ENCODE measurements at regions of chr12 and their contacts with region 1.

Region 1: DNA sequence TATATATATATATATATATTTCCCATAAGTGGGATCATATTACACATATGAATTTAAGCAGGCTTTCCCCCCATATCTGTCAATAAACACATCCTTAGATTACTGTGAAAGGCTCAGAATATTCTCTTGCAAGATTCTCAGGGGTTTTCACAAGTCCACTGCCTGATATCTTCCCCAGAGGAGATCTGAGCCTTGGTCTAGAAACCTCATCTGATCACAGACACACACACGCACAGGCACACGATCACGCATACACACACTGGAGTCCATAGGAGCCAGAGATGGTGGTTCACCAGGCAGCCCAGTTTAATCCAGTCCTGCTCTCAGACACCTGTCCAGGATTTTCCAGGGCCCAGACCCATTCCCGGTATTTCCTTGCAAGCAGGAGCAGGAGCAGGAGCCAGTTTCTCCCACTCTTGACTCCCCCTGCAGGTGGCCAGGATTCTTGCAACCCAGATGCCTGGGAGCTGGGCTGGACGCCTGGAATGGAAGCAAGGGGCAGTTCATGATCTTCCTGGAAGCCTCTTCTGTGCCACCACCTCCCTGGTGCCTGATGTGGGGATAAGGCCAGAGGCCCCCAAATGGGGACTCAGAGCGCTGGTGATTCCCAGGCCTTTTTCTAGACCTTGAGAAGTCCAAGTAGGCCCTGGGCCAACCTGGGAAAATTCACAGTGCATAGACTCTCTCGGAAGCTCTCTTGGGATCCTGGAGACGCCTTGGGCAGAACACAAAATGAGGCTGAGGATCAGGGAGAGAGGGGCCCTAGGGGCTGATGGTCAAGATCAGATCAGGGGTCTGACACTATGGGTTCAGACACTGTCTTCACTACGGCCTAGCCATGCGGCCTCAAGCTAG is 16.5 kb upstream of the KRT78 start:
- DNase-seq: no peak
- H3K4me3 ChIP-seq: no peak overlapping the region
- CTCF ChIP-seq: peak; percentile 94

Region 2: GRCh38 chr12:52691076-52691840 is 174.1 kb before region 1 on chr12:
- CTCF ChIA-PET with region 1: interaction called, 11 read pairs
- POLR2A ChIA-PET with region 1: no interaction called
- DNase-seq: no peak
- H3K4me3 ChIP-seq: peak overlapping the region; percentile 12; the same call in 1 of the 2 replicates
- CTCF ChIP-seq: no peak

Region 3: DNA sequence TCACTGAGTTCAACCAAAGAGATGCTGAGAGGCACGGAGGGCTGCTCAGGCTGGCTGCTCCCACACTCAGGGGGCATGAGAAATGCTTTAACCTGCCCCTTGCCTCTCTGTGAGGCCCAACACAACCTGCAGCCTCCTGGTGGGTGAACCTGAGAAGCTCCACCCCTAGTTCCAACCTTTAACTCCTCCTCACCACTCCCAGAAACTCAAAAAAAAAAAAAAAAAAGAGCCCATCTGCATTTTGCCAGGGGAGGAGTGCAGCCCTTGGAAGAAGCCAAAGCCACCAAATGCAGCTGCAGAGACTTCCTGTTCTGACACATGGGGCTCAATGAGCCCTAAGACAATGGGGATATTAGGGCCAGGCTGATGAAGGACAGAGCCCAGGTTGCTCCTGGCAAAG is 60.3 kb before region 1 on chr12:
- CTCF ChIA-PET with region 1: no interaction called
- POLR2A ChIA-PET with region 1: no interaction called
- DNase-seq: no peak
- H3K4me3 ChIP-seq: no peak overlapping the region
- CTCF ChIP-seq: no peak